Esophagus muscularis mucosa (tissue), 4 donors: ENCODE measurements at regions of chr10 and their contacts with region 1.

Region 1: DNA sequence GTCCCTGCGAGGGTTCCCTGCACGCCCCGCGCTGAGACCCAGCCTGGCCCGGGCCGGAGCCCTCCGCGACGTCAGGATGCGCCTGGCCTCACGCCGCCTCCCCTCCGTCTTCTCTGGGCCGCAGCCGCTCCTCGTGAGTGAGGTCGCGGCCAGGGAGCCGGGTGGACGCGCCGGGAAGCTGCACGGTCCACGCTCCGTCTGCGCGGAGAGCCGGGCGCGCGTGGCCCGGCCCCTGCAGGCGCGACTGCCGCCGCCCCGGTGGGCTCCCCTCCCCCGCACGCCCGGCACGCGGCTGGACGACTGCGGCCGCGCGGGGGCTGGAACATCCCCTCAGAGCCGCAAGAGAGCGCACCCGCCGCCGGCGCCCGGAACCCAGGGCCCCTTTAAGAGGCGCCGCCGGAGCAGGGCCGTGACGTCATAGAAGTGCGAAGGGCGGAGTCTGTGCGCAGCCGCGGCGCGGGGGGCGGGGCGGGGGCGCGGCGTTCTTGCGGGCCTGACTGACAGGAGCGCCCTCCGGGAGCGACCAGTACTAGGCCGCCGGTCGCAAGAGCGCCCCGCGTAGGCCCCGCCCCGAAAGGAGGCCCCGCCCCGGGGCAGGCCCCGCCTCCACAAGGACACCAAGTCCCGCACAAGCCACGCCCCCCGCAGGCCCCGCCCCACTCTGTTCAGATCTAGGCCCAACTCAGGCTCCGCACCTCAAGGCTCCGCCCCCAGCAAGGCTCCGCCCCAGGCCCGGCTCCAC is 445 bp upstream of the INPP5A start:
- DNase-seq: peak; percentile 100
- H3K4me3 ChIP-seq: peak overlapping the region; percentile 73 to 93 (median 83)
- H3K27ac ChIP-seq: peak overlapping the region; percentile 93 to 98 (median 96)
- H3K4me1 ChIP-seq: peaks cover 53 to 67% (median 63%) of the 10 kb centered on the region in 4 donors
- H3K27me3 ChIP-seq: no peaks in the 10 kb centered on the region
- CTCF ChIP-seq: peak; percentile 31 to 64 (median 44)
- EP300 ChIP-seq: no peak
- POLR2A ChIP-seq: no peak

Region 2: DNA sequence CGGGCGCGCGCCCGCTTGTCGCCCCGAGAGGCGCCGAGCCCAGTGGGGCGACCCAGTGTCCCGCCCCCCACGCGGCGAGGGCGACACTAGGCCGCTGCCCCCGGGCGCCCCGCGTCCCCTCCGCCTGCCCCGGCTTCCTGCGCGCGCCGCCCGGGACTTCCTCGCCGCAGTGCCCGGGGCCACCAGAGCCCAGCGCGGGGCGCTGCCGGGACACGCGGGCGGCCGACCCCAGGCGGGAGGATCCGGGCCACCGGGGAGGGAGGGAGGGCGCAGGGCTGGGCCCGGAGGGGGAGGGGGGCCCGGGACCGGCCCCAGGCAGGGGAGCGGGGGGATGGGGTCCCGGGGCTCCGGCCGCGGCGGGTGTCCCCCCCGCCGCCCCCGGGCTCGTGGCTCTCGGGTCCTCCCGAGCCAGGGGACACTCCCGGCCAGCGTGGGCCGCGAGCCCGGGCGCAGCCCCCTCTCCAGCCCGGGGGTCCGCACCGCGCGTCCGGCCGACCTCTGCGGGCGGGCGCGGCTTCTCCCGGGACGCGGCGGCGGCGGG is 140.6 kb before region 1 on chr10:
- intact Hi-C with region 1: loop called (anchors 5 kb)
- DNase-seq: no peak
- H3K4me3 ChIP-seq: peak overlapping the region; percentile 74 to 96 (median 92)
- H3K27ac ChIP-seq: peak overlapping the region; percentile 91 to 99 (median 94)
- H3K4me1 ChIP-seq: peaks cover 39 to 61% (median 57%) of the 10 kb centered on the region in 4 donors
- H3K27me3 ChIP-seq: no peaks in the 10 kb centered on the region
- CTCF ChIP-seq: peak; percentile 45 to 68 (median 63)
- EP300 ChIP-seq: no peak
- POLR2A ChIP-seq: no peak

Region 3: DNA sequence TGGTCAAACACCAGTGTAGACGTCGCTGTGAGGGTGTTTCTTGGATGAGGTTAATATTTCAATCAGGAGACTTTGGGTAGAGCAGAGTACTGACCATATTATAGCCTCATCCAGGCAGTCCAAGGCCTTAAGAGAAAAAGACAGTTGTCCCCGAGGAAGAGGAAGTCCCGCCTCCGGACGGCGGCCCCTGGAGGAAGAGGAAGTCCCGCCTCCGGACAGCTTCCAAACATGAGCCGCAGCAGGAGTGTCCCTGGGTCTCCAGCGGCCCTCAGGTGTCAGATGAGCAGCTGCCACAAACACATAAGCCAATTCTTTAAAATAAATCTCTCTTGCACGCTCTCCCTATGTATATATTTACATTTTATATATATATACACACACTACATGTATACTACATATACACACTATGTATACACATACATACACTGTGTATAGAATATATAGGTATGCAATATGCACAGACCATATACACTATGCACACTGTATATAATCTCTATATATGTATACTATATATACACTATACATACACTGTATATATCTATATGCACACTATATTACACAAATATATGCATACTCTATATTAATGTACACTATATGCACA is 102.6 kb before region 1 on chr10:
- intact Hi-C with region 1: no loop called
- DNase-seq: no peak
- H3K4me3 ChIP-seq: no peak overlapping the region
- H3K27ac ChIP-seq: no peak overlapping the region
- H3K4me1 ChIP-seq: peaks cover 0 to 9% (median 6%) of the 10 kb centered on the region in 4 donors
- H3K27me3 ChIP-seq: no peaks in the 10 kb centered on the region
- CTCF ChIP-seq: no peak
- EP300 ChIP-seq: no peak
- POLR2A ChIP-seq: no peak

Region 4: DNA sequence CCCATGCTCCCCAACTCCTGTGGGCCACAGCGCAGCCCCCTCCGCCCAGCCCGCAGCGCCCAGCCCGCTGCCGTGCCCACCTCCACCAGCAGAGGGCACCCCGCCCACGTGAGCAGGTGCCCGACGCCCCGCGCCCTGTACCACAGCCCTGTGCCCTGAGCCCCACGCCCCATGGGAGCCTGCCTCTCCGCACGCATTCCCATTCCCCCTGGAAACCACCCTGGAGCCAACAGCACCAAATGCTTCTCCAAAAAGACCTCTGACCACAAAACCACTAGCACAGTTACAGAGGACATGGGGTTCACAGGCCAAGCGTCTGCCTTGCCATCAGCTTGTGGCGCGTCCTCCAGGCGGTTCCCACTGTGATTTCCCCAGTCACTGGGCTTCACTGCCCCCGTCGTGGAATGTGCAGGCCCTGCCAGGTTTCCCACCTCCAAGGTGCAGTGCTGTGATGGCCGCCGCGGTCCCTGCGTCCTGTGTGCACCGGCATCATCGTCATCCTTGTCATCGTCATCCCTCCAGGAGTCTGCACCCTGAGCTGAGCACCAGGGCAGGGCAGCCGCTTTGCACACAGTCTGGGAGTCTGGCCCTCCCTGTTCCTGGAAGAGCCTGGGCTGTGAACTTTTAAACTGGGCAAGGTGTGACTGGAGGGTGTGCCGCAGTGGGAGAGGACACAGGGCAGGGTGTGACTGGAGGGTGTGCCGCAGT is 78.4 kb before region 1 on chr10:
- intact Hi-C with region 1: loop called (anchors 5 kb)
- DNase-seq: no peak
- H3K4me3 ChIP-seq: no peak overlapping the region
- H3K27ac ChIP-seq: peak overlapping the region in 1 of 4 donors; percentile 16
- H3K4me1 ChIP-seq: peaks cover 28 to 55% (median 50%) of the 10 kb centered on the region in 4 donors
- H3K27me3 ChIP-seq: peaks cover 0 to 19% (median 0%) of the 10 kb centered on the region in 4 donors
- CTCF ChIP-seq: peak in 2 of 3 experiments; percentile 97
- EP300 ChIP-seq: no peak
- POLR2A ChIP-seq: no peak

Region 5: DNA sequence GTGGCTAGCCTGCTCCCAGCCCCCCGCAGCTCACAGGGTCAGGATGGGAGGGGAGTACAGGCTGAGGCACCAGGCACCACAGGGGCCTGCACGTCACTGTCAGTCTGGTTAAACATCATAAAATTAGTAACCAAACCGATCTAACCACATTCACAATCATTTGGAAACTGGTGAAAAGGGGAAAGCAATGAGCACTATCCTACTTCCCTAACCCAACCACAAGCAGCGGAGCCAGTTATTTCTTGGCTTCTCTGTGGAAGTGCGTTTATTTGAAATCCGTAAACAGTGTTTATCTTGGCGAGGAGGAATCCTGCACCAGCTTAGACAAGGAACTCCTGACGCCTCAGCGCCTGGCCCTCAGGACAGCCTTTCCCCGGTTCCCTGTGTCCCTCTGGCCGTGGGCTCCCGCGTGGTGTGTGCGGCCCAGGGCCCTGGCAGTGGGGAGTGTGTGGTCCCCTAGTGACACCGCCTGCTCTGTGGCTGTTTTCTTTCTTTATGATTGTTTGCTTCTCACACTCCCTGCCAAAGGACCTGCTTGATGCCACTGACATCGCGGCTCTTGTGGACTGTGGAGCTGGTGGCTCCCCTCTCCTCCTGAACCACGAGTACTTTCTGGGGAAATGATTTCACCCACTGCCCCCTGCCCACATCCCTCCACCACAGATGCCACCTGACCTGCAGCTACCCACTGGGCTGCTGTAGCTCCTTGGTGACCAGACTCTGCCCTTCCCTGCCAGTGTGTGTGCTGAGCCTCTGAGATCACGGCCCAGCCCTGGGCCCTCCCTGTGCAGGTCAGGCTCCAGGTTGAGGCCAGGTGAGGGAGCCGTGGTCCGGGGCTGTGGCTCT is 38.4 kb after region 1 on chr10:
- intact Hi-C with region 1: loop called (anchors 5 kb)
- DNase-seq: no peak
- H3K4me3 ChIP-seq: peak overlapping the region; percentile 10 to 30 (median 20)
- H3K27ac ChIP-seq: peak overlapping the region; percentile 78 to 81 (median 80)
- H3K4me1 ChIP-seq: peaks cover 83 to 95% (median 90%) of the 10 kb centered on the region in 4 donors
- H3K27me3 ChIP-seq: no peaks in the 10 kb centered on the region
- CTCF ChIP-seq: no peak
- EP300 ChIP-seq: no peak
- POLR2A ChIP-seq: no peak